ENCODE measurements at regions of chr6 and their contacts with region 1.

Region 1: GRCh38 chr6:71509191-71510005 is 220.8 kb downstream of the OGFRL1 start:
- DNase-seq: no peak
- H3K4me3 ChIP-seq: no peak overlapping the region
- H3K27ac ChIP-seq: no peak overlapping the region
- H3K4me1 ChIP-seq: no peaks in the 10 kb centered on the region
- H3K27me3 ChIP-seq: no peaks in the 10 kb centered on the region
- CTCF ChIP-seq: no peak
- POLR2A ChIP-seq: no peak

Region 2: GRCh38 chr6:71367756-71368155 is 141.6 kb before region 1 on chr6:
- intact Hi-C with region 1: no loop called
- DNase-seq: no peak
- H3K4me3 ChIP-seq: no peak overlapping the region
- H3K27ac ChIP-seq: no peak overlapping the region
- H3K4me1 ChIP-seq: no peaks in the 10 kb centered on the region
- H3K27me3 ChIP-seq: no peaks in the 10 kb centered on the region
- CTCF ChIP-seq: no peak
- POLR2A ChIP-seq: no peak

Region 3: GRCh38 chr6:71383901-71384489 is 125.4 kb before region 1 on chr6:
- intact Hi-C with region 1: loop called (anchors 10 kb)
- DNase-seq: no peak
- H3K4me3 ChIP-seq: no peak overlapping the region
- H3K27ac ChIP-seq: no peak overlapping the region
- H3K4me1 ChIP-seq: no peaks in the 10 kb centered on the region
- H3K27me3 ChIP-seq: no peaks in the 10 kb centered on the region
- CTCF ChIP-seq: peak in 2 of 3 experiments; percentile 27 to 73
- POLR2A ChIP-seq: no peak

Region 4: DNA sequence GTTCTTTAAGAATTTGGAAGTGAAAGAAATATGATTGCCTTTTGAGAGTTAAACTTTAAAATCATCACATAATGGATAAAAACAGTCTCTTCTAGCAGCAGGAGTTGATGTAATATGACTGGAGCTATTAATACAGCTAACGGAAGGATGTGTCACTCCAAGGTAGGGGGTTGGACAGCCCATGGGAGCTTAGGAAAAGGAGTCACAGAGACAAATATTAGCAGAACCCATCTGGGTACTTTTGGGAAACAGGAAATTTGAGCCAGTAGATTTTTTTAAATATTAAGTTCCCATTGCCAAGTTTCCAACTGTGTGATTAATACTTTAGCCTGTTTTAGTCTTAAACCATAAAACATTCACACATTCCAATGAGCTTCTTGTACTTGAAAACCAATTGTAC is 212.2 kb after region 1 on chr6:
- intact Hi-C with region 1: no loop called
- DNase-seq: no peak
- H3K4me3 ChIP-seq: no peak overlapping the region
- H3K27ac ChIP-seq: no peak overlapping the region
- H3K4me1 ChIP-seq: no peaks in the 10 kb centered on the region
- H3K27me3 ChIP-seq: no peaks in the 10 kb centered on the region
- CTCF ChIP-seq: no peak
- POLR2A ChIP-seq: no peak